ENCODE measurements at regions of chr20 and their contacts with region 1.

Region 1: DNA sequence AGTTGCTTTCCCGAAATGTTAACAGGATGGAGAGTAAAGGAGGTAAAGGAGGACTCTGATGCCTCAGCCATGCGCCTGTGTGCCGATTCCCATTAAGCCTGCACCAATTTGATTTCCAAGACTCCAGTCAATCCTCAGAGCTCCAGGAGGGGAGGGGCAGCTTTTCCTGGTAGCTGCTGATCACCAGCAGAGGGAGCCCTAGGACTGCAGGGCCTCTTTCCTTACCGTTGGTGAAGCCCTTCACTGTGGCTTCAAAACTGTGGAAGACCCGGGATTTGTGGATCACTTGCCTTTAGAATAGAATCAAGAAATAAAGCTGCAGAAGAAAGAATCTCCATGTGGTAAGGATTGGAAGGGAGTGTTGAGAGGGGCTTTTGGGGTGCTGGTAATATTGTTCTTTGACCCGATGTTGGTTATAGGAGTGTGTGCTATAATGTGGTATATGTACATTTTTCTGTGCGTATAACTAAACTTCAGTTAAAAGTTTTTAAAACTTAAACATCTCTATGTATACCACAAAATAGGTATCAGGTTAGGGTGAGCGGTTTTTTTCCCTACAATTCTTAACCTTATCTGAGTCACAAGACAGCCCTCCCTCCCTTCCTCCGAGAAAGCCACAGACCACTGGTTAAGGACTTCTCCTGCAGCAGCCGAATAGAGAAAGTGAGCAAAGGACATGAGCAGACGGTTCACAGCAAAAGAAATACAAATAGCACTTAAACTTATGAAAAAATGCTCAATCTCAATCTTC is 6.9 kb upstream of the OSER1 start:
- DNase-seq: peak; percentile 66 to 81
- H3K4me3 ChIP-seq: no peak overlapping the region
- H3K27ac ChIP-seq: no peak overlapping the region
- H3K4me1 ChIP-seq: peaks cover 0 to 2% (median 0%) of the 10 kb centered on the region in 4 experiments; a peak in 1 of 7 replicates
- H3K27me3 ChIP-seq: no peaks in the 10 kb centered on the region
- CTCF ChIP-seq: peak; percentile 94 to 98 (median 95)
- EP300 ChIP-seq: no peak
- POLR2A ChIP-seq: no peak
- RAD21 ChIP-seq: peak; percentile 95

Region 2: DNA sequence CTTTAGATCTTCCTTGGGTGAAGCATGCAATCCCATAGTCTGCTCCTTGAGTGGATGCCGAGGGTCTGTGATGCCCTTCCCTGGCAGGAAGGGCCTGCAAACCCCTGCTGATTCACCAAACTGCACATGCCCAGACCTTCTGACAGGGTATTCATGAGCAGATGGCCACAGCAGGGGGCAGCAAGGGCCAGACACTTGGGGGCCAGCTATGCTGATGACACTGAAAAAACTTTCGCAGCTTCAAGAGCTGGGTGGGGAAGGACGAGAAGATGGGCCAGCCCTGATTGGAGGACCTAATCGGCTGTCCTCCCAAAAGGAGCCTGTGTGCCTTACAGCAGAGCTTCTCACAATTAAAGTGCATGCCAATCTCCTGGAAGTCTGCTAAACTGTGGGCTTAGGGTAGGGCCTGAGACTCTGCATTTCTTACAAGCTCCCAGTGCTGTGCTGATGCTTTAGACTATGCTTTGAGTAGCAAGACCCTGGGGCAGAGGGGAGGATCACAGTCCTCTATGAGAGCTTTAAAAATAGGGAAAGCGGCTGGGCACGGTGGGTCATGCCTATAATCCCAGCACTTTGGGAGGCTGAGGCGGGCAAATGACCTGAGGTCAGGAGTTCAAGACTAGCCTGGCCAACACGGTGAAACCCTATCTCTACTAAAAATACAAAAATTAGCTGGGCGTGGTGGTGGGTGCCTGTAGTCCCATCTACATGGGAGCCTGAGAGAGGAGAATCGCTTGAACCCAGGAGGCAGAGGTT is 14.4 kb after region 1 on chr20:
- CTCF ChIA-PET with region 1: interaction called, 26 read pairs
- POLR2A ChIA-PET with region 1: no interaction called
- DNase-seq: no peak
- H3K4me3 ChIP-seq: no peak overlapping the region
- H3K27ac ChIP-seq: no peak overlapping the region
- H3K4me1 ChIP-seq: peaks cover 0 to 6% (median 0%) of the 10 kb centered on the region in 4 experiments; a peak in 4 of 7 replicates
- H3K27me3 ChIP-seq: no peaks in the 10 kb centered on the region
- CTCF ChIP-seq: no peak
- EP300 ChIP-seq: no peak
- POLR2A ChIP-seq: no peak
- RAD21 ChIP-seq: no peak

Region 3: GRCh38 chr20:44253528-44253927 is 36.0 kb after region 1 on chr20:
- CTCF ChIA-PET with region 1: interaction called, 25 read pairs
- POLR2A ChIA-PET with region 1: no interaction called
- DNase-seq: no peak
- H3K4me3 ChIP-seq: no peak overlapping the region
- H3K27ac ChIP-seq: no peak overlapping the region
- H3K4me1 ChIP-seq: peaks cover 0 to 7% (median 1%) of the 10 kb centered on the region in 4 experiments; a peak in 4 of 7 replicates
- H3K27me3 ChIP-seq: no peaks in the 10 kb centered on the region; a peak in 1 of 7 replicates
- CTCF ChIP-seq: peak; percentile 42 to 60 (median 48)
- EP300 ChIP-seq: no peak
- POLR2A ChIP-seq: no peak
- RAD21 ChIP-seq: peak in 1 of 2 experiments; percentile 24; a peak in 1 of 4 replicates

Region 4: GRCh38 chr20:44271915-44272663 is 54.6 kb after region 1 on chr20:
- CTCF ChIA-PET with region 1: interaction called, 21 read pairs
- POLR2A ChIA-PET with region 1: no interaction called
- DNase-seq: peak; percentile 27 to 79
- H3K4me3 ChIP-seq: peak overlapping the region in 1 of 4 experiments; percentile 23; a peak in 2 of 8 replicates
- H3K27ac ChIP-seq: no peak overlapping the region
- H3K4me1 ChIP-seq: peaks cover 0 to 8% (median 5%) of the 10 kb centered on the region in 4 experiments; a peak in 6 of 7 replicates
- H3K27me3 ChIP-seq: no peaks in the 10 kb centered on the region
- CTCF ChIP-seq: peak; percentile 70 to 93 (median 84)
- EP300 ChIP-seq: no peak
- POLR2A ChIP-seq: no peak
- RAD21 ChIP-seq: peak; percentile 46 to 59

Region 5: GRCh38 chr20:44310664-44311639 is 93.4 kb after region 1 on chr20 and contains the start of gene FITM2:
- CTCF ChIA-PET with region 1: interaction called, 139 read pairs
- POLR2A ChIA-PET with region 1: interaction called, 3 read pairs
- DNase-seq: peak; percentile 93 to 99
- H3K4me3 ChIP-seq: peak within 1 kb of the TSS; percentile 57 to 79 (median 76)
- H3K27ac ChIP-seq: no peak within 1 kb of the TSS
- H3K4me1 ChIP-seq: peaks cover 0 to 5% (median 2%) of the 10 kb centered on the region in 4 experiments; a peak in 2 of 7 replicates
- H3K27me3 ChIP-seq: peaks cover 0 to 18% (median 8%) of the 10 kb centered on the region in 4 experiments; a peak in 4 of 7 replicates
- CTCF ChIP-seq: peak; percentile 90 to 93 (median 92)
- EP300 ChIP-seq: no peak
- POLR2A ChIP-seq: 0 out of 3 replicates have a peak, but pooled peaks of 1 of the 2 experiments have one; percentile 31
- RAD21 ChIP-seq: peak; percentile 73 to 77
- total RNA-seq, gene FITM2: 2.0 and 2.1 TPM in 2 replicates

Region 6: DNA sequence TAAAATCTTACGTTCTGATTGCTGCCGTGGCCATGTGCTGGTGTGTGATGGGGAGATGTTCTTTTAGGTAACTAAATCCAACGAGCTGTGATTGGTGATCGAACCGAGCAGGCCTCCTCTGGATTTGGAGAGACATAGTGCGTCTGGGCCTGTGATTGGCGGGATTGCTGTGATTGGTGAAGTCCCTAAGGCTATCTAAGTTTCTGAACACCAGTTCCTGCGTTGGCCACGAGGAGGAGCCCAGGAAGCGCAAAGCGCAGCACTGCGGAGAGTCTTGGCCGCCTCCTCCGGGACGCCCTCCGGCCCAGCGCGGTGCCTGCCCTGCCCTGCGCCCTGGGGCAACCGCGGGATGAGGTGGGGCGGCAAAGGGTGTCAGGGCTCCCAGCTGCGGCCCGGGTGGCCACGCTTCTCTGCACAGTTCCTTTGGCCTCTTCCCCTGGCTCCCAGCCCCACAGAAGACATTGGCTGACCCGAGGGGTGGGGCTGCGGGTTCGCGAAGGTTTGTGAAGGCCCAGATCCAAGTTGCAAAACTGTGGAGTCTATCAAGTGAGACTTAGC is 171.0 kb after region 1 on chr20:
- CTCF ChIA-PET with region 1: interaction called, 153 read pairs
- POLR2A ChIA-PET with region 1: interaction called, 3 read pairs
- DNase-seq: peak; percentile 83 to 95
- H3K4me3 ChIP-seq: peak overlapping the region in 3 of 4 experiments; percentile 5 to 50 (median 32); a peak in 4 of 8 replicates
- H3K27ac ChIP-seq: no peak overlapping the region
- H3K4me1 ChIP-seq: peaks cover 0 to 5% (median 4%) of the 10 kb centered on the region in 4 experiments; a peak in 4 of 7 replicates
- H3K27me3 ChIP-seq: peaks cover 0 to 4% (median 0%) of the 10 kb centered on the region in 4 experiments; a peak in 3 of 7 replicates
- CTCF ChIP-seq: peak; percentile 90 to 93 (median 92)
- EP300 ChIP-seq: no peak
- POLR2A ChIP-seq: no peak
- RAD21 ChIP-seq: peak; percentile 89 to 90

Region 7: GRCh38 chr20:44609511-44610312 is 392.2 kb after region 1 on chr20:
- CTCF ChIA-PET with region 1: interaction called, 25 read pairs
- POLR2A ChIA-PET with region 1: no interaction called
- DNase-seq: peak; percentile 85 to 98
- H3K4me3 ChIP-seq: no peak overlapping the region
- H3K27ac ChIP-seq: no peak overlapping the region
- H3K4me1 ChIP-seq: peaks cover 0 to 4% (median under 1%) of the 10 kb centered on the region in 4 experiments; a peak in 3 of 7 replicates
- H3K27me3 ChIP-seq: no peaks in the 10 kb centered on the region
- CTCF ChIP-seq: peak; percentile 96 to 99 (median 96)
- EP300 ChIP-seq: no peak
- POLR2A ChIP-seq: no peak
- RAD21 ChIP-seq: peak; percentile 99

Measured in H1 (cell line).